ENCODE measurements at regions of chr9 and their contacts with region 1.

Region 1: DNA sequence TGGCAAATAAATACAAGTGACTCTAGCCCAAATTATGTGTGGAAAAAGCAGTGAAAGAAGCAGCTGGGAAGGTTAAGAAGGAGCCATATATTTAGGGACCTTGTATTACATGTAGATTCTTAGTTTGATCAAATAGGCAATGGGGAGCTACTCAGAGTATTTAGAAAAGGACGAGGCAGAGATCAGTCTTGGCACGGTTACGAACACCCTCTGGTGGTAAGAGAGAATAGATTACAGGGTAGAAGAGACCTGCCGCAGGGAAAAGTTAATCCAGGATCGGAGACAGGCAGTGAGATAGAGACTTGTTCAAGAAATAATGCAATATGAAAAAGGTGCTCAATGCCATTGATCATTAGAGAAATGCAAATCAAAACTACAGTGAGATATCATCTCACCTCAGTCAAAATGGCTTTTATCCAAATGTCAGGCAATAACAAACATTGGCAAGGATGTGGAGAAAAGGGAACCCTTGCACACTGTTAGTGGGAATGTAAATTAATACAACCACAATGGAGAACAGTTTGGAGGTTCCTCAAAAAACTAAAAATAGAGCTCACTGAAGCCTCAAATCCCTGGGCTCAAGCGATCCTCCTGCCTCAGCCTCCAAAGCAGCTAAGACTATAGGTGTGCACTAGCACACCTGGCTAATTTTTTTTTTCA is 12.0 kb downstream of the INIP start:
- DNase-seq: peak in 1 of 2 experiments; percentile 22
- H3K4me3 ChIP-seq: no peak overlapping the region
- H3K4me3 Mint-ChIP-seq: no peak overlapping the region
- H3K27ac Mint-ChIP-seq: no peak overlapping the region
- H3K4me1 ChIP-seq: no peaks in the 10 kb centered on the region
- H3K4me1 Mint-ChIP-seq: peaks cover 12% of the 10 kb centered on the region
- H3K27me3 ChIP-seq: no peaks in the 10 kb centered on the region
- H3K27me3 Mint-ChIP-seq: no peaks in the 10 kb centered on the region
- CTCF ChIP-seq: peak; percentile 48

Region 2: GRCh38 chr9:112443200-112443599 is 262.7 kb before region 1 on chr9:
- CTCF ChIA-PET with region 1: no interaction called
- POLR2A ChIA-PET with region 1: no interaction called
- intact Hi-C with region 1: loop called (anchors 10 kb)
- DNase-seq: no peak
- H3K4me3 ChIP-seq: no peak overlapping the region
- H3K4me3 Mint-ChIP-seq: no peak overlapping the region
- H3K27ac Mint-ChIP-seq: no peak overlapping the region
- H3K4me1 ChIP-seq: no peaks in the 10 kb centered on the region
- H3K4me1 Mint-ChIP-seq: peaks cover 17% of the 10 kb centered on the region
- H3K27me3 ChIP-seq: no peaks in the 10 kb centered on the region
- H3K27me3 Mint-ChIP-seq: no peaks in the 10 kb centered on the region
- CTCF ChIP-seq: peak; percentile 41 to 51

Region 3: DNA sequence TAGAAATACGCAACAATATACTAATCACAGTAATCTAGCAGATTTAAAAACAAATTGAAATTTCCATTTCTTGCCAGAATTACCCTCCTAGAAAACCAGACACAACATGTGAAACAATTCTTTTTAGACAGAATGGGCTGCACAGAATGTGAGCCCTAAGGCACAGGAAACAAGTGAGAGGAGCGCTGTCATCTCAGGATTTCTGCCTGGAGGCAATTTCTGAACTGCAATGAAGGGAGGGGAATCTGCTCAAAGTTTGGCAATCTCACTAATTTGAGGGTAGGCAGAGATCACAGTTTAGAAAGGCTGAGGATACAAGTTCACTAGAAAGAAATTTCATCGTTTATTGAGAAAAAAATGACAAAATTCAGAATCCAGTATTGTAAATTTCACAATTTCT is 58.3 kb before region 1 on chr9:
- CTCF ChIA-PET with region 1: no interaction called
- POLR2A ChIA-PET with region 1: no interaction called
- intact Hi-C with region 1: no loop called
- DNase-seq: no peak
- H3K4me3 ChIP-seq: no peak overlapping the region
- H3K4me3 Mint-ChIP-seq: no peak overlapping the region
- H3K27ac Mint-ChIP-seq: no peak overlapping the region
- H3K4me1 ChIP-seq: no peaks in the 10 kb centered on the region
- H3K4me1 Mint-ChIP-seq: peaks cover 7% of the 10 kb centered on the region
- H3K27me3 ChIP-seq: no peaks in the 10 kb centered on the region
- H3K27me3 Mint-ChIP-seq: no peaks in the 10 kb centered on the region
- CTCF ChIP-seq: no peak

Measured in Caco-2 (cell line).